Activated naive CD4-positive, alpha-beta T cell treated with anti-CD3 and anti-CD28 coated beads for 36 hours (primary cell): ENCODE measurements at regions of chr1 and their contacts with region 1.

Region 1: GRCh38 chr1:21270086-21270689 is 20.1 kb downstream of the ECE1 start:
- DNase-seq: peak; percentile 92
- H3K4me3 Mint-ChIP-seq: no peak overlapping the region
- H3K27ac Mint-ChIP-seq: peak overlapping the region; percentile 52
- H3K4me1 Mint-ChIP-seq: peaks cover 21% of the 10 kb centered on the region
- H3K27me3 Mint-ChIP-seq: no peaks in the 10 kb centered on the region

Region 2: DNA sequence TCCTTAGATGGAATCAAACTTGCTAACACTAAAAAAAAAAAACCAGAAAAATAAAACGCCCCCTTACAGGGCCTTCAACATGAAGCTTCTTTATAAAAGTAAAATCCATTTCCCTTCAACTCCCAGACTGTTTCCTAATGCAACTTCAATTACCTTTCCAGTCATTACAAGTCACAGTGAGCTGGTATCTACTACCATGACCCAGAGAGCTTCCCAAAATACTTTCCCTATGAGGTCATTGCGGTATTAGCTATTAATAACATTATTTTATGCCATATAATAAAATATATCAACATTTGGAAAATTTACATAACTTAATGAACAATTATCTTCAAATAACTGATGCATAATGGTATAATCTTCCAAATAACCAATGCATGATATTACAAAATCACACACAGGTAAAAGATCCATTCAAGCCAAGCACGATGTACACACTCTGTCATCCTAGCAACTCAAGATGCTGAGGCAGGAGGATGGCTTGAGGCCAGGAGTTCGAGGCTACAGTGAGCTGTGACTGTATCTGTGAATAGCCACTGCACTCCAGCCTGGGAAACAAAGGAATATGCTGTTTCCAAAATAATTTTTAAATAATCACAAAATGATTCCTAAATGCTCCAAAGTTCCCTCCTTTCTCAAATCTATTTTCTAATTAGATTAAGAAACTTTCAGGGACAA is 117.6 kb before region 1 on chr1:
- CTCF ChIA-PET with region 1: no interaction called
- intact Hi-C with region 1: no loop called
- DNase-seq: no peak
- H3K4me3 Mint-ChIP-seq: no peak overlapping the region
- H3K27ac Mint-ChIP-seq: no peak overlapping the region
- H3K4me1 Mint-ChIP-seq: no peaks in the 10 kb centered on the region
- H3K27me3 Mint-ChIP-seq: no peaks in the 10 kb centered on the region

Region 3: DNA sequence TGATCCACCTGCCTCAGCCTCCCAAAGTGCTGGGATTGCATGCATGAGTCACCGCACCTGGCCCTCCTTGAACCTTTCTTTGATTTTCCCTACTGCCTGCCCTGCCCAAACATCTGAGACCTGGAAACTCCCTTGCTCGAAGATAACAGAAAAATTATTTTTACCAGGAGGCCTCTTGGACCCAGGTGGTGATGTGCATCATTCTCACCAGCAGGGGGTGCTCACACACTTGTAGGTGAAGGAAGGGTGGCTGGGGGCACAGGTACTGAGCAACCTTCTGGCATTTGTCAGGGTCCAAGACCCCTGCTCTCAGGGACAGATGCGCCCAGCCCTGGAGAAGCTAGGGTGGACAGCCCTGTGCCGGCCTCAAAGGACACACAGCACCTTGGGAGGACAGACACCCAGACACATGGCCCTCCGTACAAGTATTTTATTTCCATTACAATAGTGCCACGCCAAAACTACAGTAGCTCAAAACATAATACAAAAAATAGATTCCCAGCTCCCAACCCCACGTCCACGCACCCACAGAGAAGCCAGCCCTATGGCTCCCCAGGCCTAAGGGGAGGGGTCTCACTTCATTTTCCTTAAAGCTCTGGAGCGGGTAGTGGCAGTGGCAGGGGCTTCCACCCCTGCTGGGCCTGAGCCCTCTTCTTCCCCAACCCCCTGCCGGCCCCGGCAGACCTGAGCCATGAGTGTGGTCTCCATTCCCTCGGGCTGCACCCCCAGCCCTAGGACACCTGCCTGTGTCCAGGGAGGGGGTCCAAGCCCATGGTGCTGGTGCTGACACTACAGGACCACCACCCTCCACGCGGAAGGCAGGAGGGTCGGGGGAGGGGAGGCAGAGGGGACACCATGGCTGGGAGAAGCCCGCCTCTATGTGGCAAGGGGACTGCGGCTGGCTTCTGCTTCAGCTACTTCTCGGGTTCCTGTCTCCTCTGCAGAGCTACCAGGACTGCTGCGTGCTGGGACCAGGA is 53.1 kb before region 1 on chr1:
- CTCF ChIA-PET with region 1: interaction called, 4 read pairs
- intact Hi-C with region 1: loop called (anchors 5 kb)
- DNase-seq: peak; percentile 89
- H3K4me3 Mint-ChIP-seq: no peak overlapping the region
- H3K27ac Mint-ChIP-seq: peak overlapping the region; percentile 50
- H3K4me1 Mint-ChIP-seq: peaks cover 7% of the 10 kb centered on the region
- H3K27me3 Mint-ChIP-seq: no peaks in the 10 kb centered on the region

Region 4: DNA sequence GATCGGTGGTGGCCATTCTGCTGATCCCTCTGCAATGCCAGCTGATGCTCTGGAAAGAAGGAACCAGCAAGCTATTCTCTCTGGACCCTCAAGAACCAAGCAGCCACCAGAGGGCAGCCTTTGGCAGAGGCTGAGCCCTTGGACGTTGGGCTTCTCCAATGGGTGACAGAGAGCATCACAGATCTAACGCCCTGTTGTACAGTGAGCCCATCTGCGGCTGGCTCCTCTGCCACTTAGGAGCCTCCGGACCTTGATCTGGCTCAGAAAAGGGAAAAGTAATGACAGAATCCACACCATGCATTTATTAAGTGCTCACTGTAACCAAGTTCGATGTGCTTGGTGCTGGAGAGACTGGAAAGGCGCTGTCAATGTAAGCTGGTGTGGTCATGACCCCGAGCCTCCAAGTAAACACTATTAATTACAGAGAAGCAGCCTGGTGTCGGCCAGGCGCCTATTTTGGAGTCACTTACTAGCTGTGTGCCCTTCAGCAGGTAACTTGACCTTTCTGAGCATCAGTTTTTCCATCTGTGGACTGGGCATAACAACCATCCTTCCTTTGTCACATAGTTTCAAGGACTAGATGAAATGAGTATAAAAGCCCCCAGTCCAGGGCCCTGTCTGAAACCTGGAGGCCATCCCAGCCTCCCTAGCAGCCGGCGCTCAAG is 14.8 kb before region 1 on chr1:
- CTCF ChIA-PET with region 1: interaction called, 144 read pairs
- intact Hi-C with region 1: no loop called
- DNase-seq: peak; percentile 90
- H3K4me3 Mint-ChIP-seq: no peak overlapping the region
- H3K27ac Mint-ChIP-seq: peak overlapping the region; percentile 66
- H3K4me1 Mint-ChIP-seq: peaks cover 53% of the 10 kb centered on the region
- H3K27me3 Mint-ChIP-seq: no peaks in the 10 kb centered on the region

Region 5: DNA sequence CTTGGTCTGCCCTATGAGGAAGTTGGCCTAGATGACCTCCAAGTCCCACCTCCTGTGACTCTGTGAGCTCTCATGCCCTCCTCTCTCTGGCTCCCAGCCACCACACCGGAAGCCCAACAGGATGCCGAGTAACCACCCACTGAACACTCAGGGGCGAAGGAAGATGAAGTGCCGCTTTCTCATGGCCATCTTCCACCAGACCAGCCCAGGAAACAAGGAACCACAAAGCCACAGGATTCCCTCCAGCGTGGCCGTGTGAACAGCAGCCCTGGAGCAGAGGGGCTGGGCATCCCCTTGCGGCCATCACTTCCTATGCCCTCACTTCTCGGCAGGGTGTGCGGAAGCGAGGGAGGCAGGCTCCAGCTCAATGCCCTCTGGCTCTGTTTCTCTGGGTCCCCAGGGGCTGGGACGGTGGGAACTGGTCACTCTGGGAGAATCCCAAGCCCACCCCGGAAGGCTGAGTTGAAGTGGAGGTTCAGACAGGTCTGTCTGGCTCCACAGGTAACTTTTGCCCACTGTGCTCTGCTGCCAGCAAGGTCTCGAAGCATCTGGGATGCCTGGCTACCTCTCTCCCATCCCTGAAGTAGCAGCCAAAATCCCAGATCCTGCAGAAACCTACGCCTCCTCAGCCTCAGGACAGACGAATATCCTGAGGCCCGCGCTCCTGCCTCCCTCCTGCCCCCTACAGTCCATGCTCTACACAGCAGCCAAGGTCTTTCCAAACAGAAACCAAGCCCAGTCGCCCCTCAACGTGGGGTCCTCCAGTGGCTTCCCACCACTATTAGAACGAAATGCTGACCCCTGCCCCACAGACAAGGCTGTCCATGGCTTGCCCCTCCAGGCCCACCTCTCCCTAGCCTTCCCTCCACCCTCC is 64.3 kb after region 1 on chr1:
- CTCF ChIA-PET with region 1: interaction called, 49 read pairs
- intact Hi-C with region 1: no loop called
- DNase-seq: peak; percentile 86
- H3K4me3 Mint-ChIP-seq: peak overlapping the region; percentile 87
- H3K27ac Mint-ChIP-seq: peak overlapping the region; percentile 99
- H3K4me1 Mint-ChIP-seq: peaks cover 91% of the 10 kb centered on the region
- H3K27me3 Mint-ChIP-seq: no peaks in the 10 kb centered on the region

Region 6: GRCh38 chr1:21368515-21369289 is 98.5 kb after region 1 on chr1:
- CTCF ChIA-PET with region 1: interaction called, 45 read pairs
- intact Hi-C with region 1: no loop called
- DNase-seq: peak; percentile 70
- H3K4me3 Mint-ChIP-seq: no peak overlapping the region
- H3K27ac Mint-ChIP-seq: peak overlapping the region; percentile 43
- H3K4me1 Mint-ChIP-seq: peaks cover 12% of the 10 kb centered on the region
- H3K27me3 Mint-ChIP-seq: no peaks in the 10 kb centered on the region